ENCODE measurements at regions of chr14 and their contacts with region 1.

Region 1: DNA sequence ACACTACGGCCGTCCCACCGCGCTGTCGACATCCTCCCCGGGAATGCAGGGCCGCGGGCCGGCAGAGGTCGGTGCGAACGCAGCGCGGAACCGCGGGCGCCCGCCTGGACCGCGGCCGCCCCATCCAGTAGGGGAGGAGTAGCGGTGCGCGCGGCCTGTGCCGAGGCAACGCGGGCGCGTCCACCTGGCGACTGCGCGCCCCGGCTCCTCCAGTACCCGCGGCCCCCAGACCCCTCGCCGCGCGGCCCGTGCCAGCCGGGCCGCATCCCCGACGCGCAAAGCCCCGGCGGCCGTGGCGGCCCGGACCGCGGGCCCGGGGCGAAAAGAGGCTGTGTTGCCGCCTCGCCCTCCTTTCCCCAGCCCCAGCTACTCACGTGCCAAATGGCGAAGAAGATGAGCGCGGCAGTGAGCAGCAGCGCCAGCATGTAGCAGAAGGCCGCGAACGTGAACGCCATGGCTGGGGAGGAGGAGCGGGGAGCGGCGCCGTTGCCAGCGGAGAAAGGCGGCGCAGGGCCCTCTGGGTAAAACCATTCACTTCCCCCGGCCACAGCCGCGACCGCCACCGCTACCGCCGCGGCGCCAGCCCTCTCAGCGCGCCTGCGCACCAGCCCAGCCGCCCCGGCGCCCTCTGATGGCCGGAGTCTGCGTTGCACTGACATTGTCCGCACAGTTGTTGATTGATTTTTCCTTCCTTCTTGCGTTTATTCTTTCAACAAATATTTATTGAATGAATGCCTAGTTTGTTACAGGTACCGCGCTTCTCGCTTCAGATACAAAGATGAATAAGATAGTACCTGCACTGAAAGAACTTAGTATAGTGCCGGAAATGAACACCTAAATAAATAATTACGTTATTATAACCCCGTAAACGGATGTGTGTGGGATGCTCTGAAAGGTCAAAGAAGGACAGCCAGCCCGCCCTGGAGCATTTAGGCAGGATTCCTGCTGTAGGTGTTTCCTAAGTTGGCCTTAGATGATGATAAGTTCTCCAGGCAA is at the start of gene CNIH1:
- DNase-seq: peak; percentile 99
- ATAC-seq: peak; percentile 95
- H3K4me3 ChIP-seq: peak within 1 kb of the TSS; percentile 74
- H3K27ac ChIP-seq: peak within 1 kb of the TSS; percentile 74
- H3K4me1 ChIP-seq: peaks cover 52% of the 10 kb centered on the region
- H3K27me3 ChIP-seq: no peaks in the 10 kb centered on the region
- CTCF ChIP-seq: peak; percentile 99
- total RNA-seq, gene CNIH1: 139 and 194 TPM in 2 replicates

Region 2: DNA sequence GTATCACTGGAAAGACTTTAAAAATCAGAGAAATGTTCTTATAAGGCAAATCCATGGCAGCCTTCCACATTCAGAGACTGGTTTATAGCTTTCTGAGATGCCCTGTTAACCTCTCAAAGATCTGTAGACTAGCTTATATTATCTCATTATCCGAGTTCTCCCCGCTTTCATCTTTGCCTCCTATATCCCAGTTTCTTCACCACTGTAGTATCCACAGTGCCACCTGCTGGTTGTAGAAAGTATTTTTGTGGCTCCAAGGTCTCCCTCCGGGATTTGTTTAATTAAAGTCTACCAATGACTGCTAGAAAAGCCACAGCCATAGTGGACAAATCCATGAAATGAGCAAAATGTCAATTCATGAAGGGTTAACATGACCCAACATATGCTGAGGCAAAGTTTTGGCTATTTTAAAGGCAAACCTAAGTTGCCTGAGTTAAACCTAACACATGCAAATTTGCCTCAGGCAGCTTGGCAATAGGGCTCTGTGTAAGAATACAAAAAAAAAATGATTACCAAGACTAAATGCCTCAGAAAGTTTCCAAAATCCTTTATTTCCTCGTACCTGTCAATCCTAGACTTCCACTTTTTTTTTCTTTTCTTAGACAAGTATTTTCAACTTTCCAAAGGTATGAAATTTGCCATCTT is 265.8 kb before region 1 on chr14:
- CTCF ChIA-PET with region 1: no interaction called
- POLR2A ChIA-PET with region 1: no interaction called
- intact Hi-C with region 1: no loop called
- DNase-seq: peak; percentile 100
- ATAC-seq: peak; percentile 61
- H3K4me3 ChIP-seq: no peak overlapping the region
- H3K27ac ChIP-seq: no peak overlapping the region
- H3K4me1 ChIP-seq: peaks cover 73% of the 10 kb centered on the region
- H3K27me3 ChIP-seq: no peaks in the 10 kb centered on the region
- CTCF ChIP-seq: peak; percentile 100

Region 3: DNA sequence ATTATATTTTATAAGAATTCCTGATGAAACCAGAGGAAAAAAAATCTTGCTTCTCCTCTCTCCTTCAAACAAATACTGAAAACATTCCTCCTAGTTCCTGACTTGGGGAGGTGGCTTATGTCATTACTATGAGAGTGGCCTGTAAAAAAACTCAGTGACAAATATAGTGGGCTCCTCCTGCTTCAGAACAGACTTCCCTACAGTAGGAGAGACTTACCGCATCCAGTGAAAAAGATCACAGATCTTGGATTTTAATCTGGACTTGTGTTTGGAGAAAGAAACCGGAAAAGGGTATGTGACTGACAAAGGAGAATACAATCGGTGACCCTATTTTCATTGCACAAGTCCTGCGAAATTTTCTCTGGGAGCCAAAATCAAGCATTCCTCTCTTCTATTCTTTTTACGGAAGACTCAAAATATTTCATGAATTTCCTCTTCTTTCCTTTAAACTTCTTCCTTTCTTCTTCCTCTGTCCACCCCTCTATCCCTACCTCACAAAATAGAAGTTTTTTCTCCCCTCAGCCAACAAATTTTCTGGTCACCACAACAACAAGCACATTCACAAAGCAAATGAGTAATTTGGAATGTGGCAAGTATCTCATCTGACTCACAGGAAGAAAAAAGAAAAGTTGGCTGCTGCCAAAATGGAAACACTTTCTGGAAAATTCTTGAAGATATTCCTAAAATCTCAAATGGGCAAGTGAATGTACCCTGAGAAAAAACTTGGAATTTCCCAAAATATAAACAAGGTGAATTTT is 229.4 kb before region 1 on chr14:
- CTCF ChIA-PET with region 1: no interaction called
- POLR2A ChIA-PET with region 1: no interaction called
- intact Hi-C with region 1: loop called (anchors 5 kb)
- DNase-seq: peak; percentile 99
- ATAC-seq: peak; percentile 89
- H3K4me3 ChIP-seq: peak overlapping the region; percentile 25
- H3K27ac ChIP-seq: peak overlapping the region; percentile 84
- H3K4me1 ChIP-seq: peaks cover 36% of the 10 kb centered on the region
- H3K27me3 ChIP-seq: no peaks in the 10 kb centered on the region
- CTCF ChIP-seq: no peak

Region 4: GRCh38 chr14:54396493-54397335 is 44.5 kb before region 1 on chr14 and contains the start of gene CDKN3:
- CTCF ChIA-PET with region 1: no interaction called
- POLR2A ChIA-PET with region 1: no interaction called
- intact Hi-C with region 1: loop called (anchors 1 kb)
- DNase-seq: peak; percentile 100
- ATAC-seq: peak; percentile 95
- H3K4me3 ChIP-seq: peak within 1 kb of the TSS; percentile 90
- H3K27ac ChIP-seq: peak within 1 kb of the TSS; percentile 39
- H3K4me1 ChIP-seq: peaks cover 24% of the 10 kb centered on the region
- H3K27me3 ChIP-seq: no peaks in the 10 kb centered on the region
- CTCF ChIP-seq: peak; percentile 54; the same call in 1 of the 2 replicates
- total RNA-seq, gene CDKN3: 354 and 434 TPM in 2 replicates

Region 5: DNA sequence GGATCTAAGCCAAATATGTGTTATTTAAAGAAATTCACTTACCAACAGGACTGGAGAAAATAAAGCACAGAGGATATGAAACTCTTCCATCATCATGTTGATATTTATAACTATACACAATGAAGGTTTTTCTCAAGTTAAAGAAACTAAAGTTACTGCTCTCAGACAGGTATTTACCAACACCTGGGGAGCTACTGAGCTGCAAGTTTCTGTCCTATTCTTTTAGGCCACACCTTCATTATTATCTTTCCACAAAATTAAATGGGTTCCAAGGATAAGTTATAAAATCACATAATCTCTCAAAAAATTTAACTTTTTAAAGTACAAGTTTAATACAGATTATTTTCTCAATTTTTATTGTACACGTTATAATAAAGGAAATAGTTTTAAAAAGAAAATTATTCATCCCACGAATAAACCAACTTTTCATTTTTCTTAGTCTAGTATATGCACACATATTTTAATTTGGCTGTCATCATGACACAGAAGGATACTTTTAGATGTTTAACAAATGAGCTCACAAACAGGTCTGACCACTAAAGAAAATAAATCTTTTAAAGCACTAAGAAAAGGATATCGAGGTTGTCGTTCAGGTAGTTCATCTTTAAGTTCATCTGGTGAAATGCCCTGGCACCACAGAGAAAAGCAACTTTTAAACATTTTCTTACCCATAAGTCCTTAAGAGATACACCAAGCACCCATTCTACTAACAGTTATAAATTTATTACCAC is 39.8 kb after region 1 on chr14:
- CTCF ChIA-PET with region 1: no interaction called
- POLR2A ChIA-PET with region 1: no interaction called
- intact Hi-C with region 1: loop called (anchors 2 kb)
- DNase-seq: peak; percentile 95
- ATAC-seq: peak; percentile 72
- H3K4me3 ChIP-seq: peak overlapping the region; percentile 36
- H3K27ac ChIP-seq: peak overlapping the region; percentile 70
- H3K4me1 ChIP-seq: peaks cover 53% of the 10 kb centered on the region
- H3K27me3 ChIP-seq: no peaks in the 10 kb centered on the region
- CTCF ChIP-seq: peak; percentile 42; the same call in 1 of the 2 replicates

Region 6: GRCh38 chr14:54488646-54489317 is 47.6 kb after region 1 on chr14 and contains the start of gene GMFB:
- CTCF ChIA-PET with region 1: no interaction called
- POLR2A ChIA-PET with region 1: no interaction called
- intact Hi-C with region 1: loop called (anchors 1 kb)
- DNase-seq: peak; percentile 99
- ATAC-seq: peak; percentile 91
- H3K4me3 ChIP-seq: peak within 1 kb of the TSS; percentile 80
- H3K27ac ChIP-seq: peak within 1 kb of the TSS; percentile 86
- H3K4me1 ChIP-seq: peaks cover 42% of the 10 kb centered on the region
- H3K27me3 ChIP-seq: no peaks in the 10 kb centered on the region
- CTCF ChIP-seq: peak; percentile 68
- total RNA-seq, gene GMFB: 45.2 and 85.2 TPM in 2 replicates

Region 7: GRCh38 chr14:54637270-54638134 is 196.3 kb after region 1 on chr14:
- CTCF ChIA-PET with region 1: no interaction called
- POLR2A ChIA-PET with region 1: no interaction called
- intact Hi-C with region 1: no loop called
- DNase-seq: peak; percentile 42
- ATAC-seq: peak; percentile 83
- H3K4me3 ChIP-seq: peak overlapping the region; percentile 4; the same call in 1 of the 2 replicates
- H3K27ac ChIP-seq: peak overlapping the region; percentile 81
- H3K4me1 ChIP-seq: peaks cover 32% of the 10 kb centered on the region
- H3K27me3 ChIP-seq: no peaks in the 10 kb centered on the region
- CTCF ChIP-seq: no peak

Measured in PC-3 (cell line).